Mucosa of descending colon (tissue), 3 donors: ENCODE measurements at regions of chr12 and their contacts with region 1.

Region 1: DNA sequence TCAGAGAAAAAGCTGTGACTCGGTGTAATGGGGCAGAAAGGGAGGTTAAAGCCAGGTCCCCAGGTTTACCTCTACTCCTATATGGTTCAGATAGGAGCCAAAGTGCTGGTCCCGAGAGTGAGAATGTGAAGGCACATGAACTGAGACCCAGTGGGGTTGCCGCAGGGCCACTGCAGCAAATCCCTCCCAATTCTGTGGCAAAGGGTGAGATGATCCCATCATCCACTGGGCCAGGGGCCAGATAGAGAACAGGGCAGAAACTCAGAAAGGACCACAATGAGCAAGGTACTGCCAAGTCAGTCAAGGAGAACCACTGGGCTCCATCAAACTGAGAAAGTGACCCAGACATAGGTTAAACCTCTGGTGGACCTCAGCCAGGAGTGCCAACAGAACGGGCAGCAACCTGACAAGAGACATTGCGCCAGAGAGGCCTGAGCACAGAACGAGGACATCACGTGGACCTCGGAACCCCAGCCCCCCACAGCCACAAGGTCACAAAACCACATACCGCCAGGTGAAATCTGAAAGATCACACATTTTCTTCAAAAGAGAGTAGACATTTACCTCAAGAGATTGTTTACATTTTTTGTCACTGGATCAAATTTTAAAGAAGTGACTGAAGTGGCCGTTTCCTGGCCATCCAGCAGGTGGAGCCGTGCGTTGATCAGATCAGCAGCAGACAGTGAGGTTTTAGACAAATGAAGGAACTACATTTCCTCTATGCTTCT is 20.5 kb upstream of the ITPR2 start:
- DNase-seq: peak; percentile 57 to 83 (median 76)
- ATAC-seq: peak; percentile 93
- H3K4me3 ChIP-seq: no peak overlapping the region
- H3K4me1 ChIP-seq: peaks cover 5% of the 10 kb centered on the region
- CTCF ChIP-seq: peak; percentile 69

Region 2: DNA sequence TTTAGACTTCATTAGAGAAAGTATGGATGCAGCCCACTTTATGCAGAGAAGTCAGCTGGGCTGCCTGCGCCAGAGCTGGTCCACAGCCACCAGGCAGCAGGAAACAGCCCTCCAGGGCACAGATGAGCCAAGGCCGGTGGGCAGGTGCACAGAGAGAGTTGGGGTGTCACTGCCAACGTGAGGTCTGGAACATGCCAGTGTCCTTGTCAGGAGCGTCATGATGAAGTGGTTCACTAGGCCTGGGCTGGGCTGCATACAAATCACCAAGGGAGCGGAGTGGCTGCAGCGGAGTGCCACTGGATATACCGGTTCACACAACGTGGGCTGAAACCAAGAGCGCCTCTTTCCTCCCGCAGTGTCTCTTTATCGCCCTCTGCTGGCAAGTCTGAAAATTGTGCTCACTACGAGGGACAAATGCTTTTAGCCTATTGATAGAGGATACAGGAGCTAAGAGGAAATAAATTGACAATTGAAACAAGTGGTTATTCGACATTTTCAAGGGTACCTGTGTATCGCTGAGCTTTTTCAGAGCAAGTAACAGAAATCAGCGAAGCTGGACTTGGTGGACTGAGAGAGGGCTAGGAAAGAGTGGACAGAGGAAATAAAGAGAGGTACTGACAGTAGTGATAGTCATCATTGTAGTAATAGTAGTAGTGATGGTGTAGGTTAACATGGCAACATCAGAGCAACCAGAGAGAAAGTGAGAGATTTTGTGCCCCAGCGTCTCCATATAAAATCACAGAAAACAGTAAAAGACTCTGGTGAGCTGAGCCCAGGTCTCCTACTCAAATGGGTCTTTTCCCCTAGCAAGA is 31.5 kb after region 1 on chr12:
- intact Hi-C with region 1: loop called in 1 of 2 experiments (anchors 5 kb)
- DNase-seq: peak; percentile 66 to 91 (median 72)
- ATAC-seq: peak; percentile 99
- H3K4me3 ChIP-seq: no peak overlapping the region
- H3K4me1 ChIP-seq: no peaks in the 10 kb centered on the region
- CTCF ChIP-seq: peak; percentile 87

Region 3: GRCh38 chr12:27305673-27306456 is 452.4 kb after region 1 on chr12:
- intact Hi-C with region 1: loop called in 1 of 2 experiments (anchors 10 kb)
- DNase-seq: no peak
- ATAC-seq: peak; percentile 33
- H3K4me3 ChIP-seq: no peak overlapping the region
- H3K4me1 ChIP-seq: no peaks in the 10 kb centered on the region
- CTCF ChIP-seq: peak; percentile 15